GM12878 (cell line): ENCODE measurements at regions of chr17 and their contacts with region 1.

Region 1: DNA sequence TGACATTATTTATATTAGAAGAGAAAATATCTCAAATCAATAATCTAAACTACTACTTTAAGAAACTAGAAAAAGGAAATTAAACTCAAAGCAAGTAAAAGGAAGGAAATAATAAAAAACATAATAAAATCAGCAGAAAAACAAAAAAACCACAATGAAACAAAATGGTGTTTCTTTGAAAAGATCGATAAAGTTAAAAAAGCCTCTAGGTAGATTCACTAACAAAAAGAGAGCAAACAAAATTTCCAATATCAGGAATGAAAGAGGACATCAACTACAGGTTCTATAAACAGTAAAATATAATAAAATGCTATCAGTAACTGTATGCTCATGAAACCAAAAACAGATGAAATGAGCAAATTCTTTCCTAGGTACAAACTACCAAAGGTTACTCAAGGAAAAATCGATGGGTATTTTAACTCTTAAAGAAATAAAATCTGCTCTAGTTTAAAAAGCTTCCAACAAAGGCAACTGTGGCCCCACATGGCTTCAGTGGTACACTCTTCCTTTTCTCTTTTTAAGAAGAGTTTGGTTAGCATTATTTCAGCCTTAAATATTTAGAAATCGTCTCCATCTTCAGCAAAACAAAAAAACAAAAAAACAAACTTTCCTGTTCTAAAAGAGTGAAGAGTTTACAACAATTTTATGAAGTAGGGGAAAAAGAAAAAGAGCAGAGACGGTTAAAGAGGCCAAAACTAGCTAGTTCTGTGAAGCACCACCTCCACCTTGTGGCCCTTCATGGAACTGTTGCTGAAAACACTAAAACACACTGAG is 102.2 kb downstream of the TRIM37 start:
- DNase-seq: peak; percentile 48
- ATAC-seq: peak; percentile 55
- H3K4me3 ChIP-seq: no peak overlapping the region
- H3K27ac ChIP-seq: no peak overlapping the region
- H3K4me1 ChIP-seq: peaks cover 18% of the 10 kb centered on the region
- H3K27me3 ChIP-seq: no peaks in the 10 kb centered on the region
- CTCF ChIP-seq: peak; percentile 91 to 93 (median 92)
- EP300 ChIP-seq: no peak
- POLR2A ChIP-seq: no peak
- RAD21 ChIP-seq: peak; percentile 98

Region 2: GRCh38 chr17:58517734-58518609 is 486.6 kb before region 1 on chr17:
- CTCF ChIA-PET with region 1: interaction called, 23 read pairs
- POLR2A ChIA-PET with region 1: interaction called, 3 read pairs
- RAD21 ChIA-PET with region 1: interaction called, 37 read pairs
- SMC1A ChIA-PET with region 1: interaction called, 28 read pairs
- in situ Hi-C with region 1: loop called (anchors 5 kb)
- intact Hi-C with region 1: loop called (anchors 1 kb)
- DNase-seq: peak; percentile 99
- ATAC-seq: peak; percentile 89
- H3K4me3 ChIP-seq: peak overlapping the region; percentile 99
- H3K27ac ChIP-seq: peak overlapping the region; percentile 93
- H3K4me1 ChIP-seq: peaks cover 19% of the 10 kb centered on the region
- H3K27me3 ChIP-seq: no peaks in the 10 kb centered on the region
- CTCF ChIP-seq: no peak
- EP300 ChIP-seq: peak in 1 of 2 experiments; percentile 44; a peak in 1 of 4 replicates
- POLR2A ChIP-seq: peak; percentile 86
- RAD21 ChIP-seq: no peak

Region 3: GRCh38 chr17:58577642-58578091 is 426.9 kb before region 1 on chr17:
- CTCF ChIA-PET with region 1: interaction called, 52 read pairs
- POLR2A ChIA-PET with region 1: interaction called, 5 read pairs
- RAD21 ChIA-PET with region 1: interaction called, 24 read pairs
- SMC1A ChIA-PET with region 1: interaction called, 53 read pairs
- in situ Hi-C with region 1: loop called (anchors 5 kb)
- intact Hi-C with region 1: loop called (anchors 1 kb)
- DNase-seq: no peak
- ATAC-seq: peak; percentile 82
- H3K4me3 ChIP-seq: no peak overlapping the region
- H3K27ac ChIP-seq: no peak overlapping the region
- H3K4me1 ChIP-seq: peaks cover 11% of the 10 kb centered on the region
- H3K27me3 ChIP-seq: no peaks in the 10 kb centered on the region
- CTCF ChIP-seq: peak; percentile 63 to 84 (median 77)
- EP300 ChIP-seq: no peak
- POLR2A ChIP-seq: no peak
- RAD21 ChIP-seq: peak; percentile 52

Region 4: DNA sequence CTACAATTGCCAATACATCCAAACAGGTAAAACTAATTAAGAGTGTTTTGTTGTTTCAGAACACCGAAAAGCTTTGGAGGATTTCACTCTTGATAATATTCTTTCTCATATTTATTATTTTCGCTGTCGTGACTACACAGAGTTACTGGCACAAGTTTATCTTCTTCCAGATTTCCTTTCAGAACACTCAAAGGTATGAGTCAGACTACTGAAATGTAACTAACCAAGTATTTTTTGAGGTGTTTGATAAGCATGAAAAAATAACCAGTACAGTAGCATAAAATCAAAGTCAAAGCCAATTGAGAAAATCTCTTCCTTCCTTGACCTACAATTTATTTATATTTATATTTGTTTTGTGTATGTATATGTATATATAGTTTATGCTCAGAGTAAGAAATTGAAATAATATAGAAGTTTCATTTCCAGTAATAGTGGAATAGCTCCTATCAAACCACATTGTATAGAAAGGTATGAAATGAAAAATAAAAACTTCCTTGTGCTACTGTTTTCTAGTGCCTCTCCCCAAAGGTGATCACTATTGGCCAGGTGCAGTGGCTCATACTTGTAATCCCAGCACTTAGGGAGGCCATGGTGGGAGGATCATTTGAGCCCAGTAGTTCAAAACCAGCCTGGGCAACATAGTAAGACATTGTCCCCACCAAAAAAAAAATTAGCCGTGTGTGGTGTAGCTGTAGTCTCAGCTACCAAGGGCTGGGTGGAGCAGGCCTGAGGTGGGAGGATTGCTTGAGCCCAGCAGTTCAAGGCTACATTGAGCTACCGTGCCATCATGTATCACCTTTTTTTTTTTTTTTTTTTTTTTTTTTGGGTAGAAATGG is 301.2 kb before region 1 on chr17:
- CTCF ChIA-PET with region 1: interaction called, 22 read pairs
- POLR2A ChIA-PET with region 1: interaction called, 6 read pairs
- RAD21 ChIA-PET with region 1: interaction called, 8 read pairs
- SMC1A ChIA-PET with region 1: interaction called, 19 read pairs
- in situ Hi-C with region 1: no loop called
- intact Hi-C with region 1: no loop called
- DNase-seq: no peak
- ATAC-seq: 0 out of 3 replicates have a peak, but pooled peaks have one; percentile 3
- H3K4me3 ChIP-seq: no peak overlapping the region
- H3K27ac ChIP-seq: peak overlapping the region; percentile 78; the same call in 1 of the 2 replicates
- H3K4me1 ChIP-seq: peaks cover 41% of the 10 kb centered on the region
- H3K27me3 ChIP-seq: no peaks in the 10 kb centered on the region
- CTCF ChIP-seq: no peak
- EP300 ChIP-seq: no peak
- POLR2A ChIP-seq: no peak
- RAD21 ChIP-seq: no peak

Region 5: DNA sequence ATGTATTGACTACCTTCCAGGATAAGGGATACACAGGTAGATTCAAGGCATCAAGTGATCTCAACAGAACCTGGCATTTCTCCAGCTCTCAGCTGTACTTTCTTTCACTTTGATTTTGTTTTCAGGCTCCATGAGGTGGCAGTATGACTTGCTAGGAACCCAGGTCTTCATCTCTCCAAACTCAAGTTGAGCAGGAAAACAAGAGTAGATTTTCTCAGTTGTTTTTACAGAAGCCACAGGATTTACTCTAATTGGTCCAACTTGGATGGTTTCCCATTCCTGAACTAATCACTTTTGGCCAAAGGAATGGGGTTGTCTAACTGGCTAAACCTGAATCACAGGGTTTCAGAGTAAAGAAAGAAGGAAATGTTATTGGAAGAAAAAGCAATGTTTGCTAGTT is 44.5 kb before region 1 on chr17:
- CTCF ChIA-PET with region 1: interaction called, 59 read pairs
- POLR2A ChIA-PET with region 1: interaction called, 4 read pairs
- RAD21 ChIA-PET with region 1: interaction called, 21 read pairs
- SMC1A ChIA-PET with region 1: interaction called, 40 read pairs
- in situ Hi-C with region 1: no loop called
- intact Hi-C with region 1: loop called (anchors 1 kb)
- DNase-seq: no peak
- ATAC-seq: peak; percentile 58
- H3K4me3 ChIP-seq: no peak overlapping the region
- H3K27ac ChIP-seq: no peak overlapping the region
- H3K4me1 ChIP-seq: no peaks in the 10 kb centered on the region
- H3K27me3 ChIP-seq: no peaks in the 10 kb centered on the region
- CTCF ChIP-seq: peak; percentile 5 to 53 (median 24); a peak in 3 of 6 replicates
- EP300 ChIP-seq: no peak
- POLR2A ChIP-seq: no peak
- RAD21 ChIP-seq: peak; percentile 61

Region 6: GRCh38 chr17:58991718-58992331 is 12.7 kb before region 1 on chr17:
- CTCF ChIA-PET with region 1: interaction called, 9 read pairs
- POLR2A ChIA-PET with region 1: no interaction called
- RAD21 ChIA-PET with region 1: interaction called, 30 read pairs
- SMC1A ChIA-PET with region 1: interaction called, 28 read pairs
- in situ Hi-C with region 1: no loop called
- intact Hi-C with region 1: no loop called
- DNase-seq: peak; percentile 39
- ATAC-seq: peak; percentile 96
- H3K4me3 ChIP-seq: no peak overlapping the region
- H3K27ac ChIP-seq: no peak overlapping the region
- H3K4me1 ChIP-seq: peaks cover 6% of the 10 kb centered on the region
- H3K27me3 ChIP-seq: no peaks in the 10 kb centered on the region
- CTCF ChIP-seq: no peak
- EP300 ChIP-seq: no peak
- POLR2A ChIP-seq: no peak
- RAD21 ChIP-seq: no peak

Region 7: DNA sequence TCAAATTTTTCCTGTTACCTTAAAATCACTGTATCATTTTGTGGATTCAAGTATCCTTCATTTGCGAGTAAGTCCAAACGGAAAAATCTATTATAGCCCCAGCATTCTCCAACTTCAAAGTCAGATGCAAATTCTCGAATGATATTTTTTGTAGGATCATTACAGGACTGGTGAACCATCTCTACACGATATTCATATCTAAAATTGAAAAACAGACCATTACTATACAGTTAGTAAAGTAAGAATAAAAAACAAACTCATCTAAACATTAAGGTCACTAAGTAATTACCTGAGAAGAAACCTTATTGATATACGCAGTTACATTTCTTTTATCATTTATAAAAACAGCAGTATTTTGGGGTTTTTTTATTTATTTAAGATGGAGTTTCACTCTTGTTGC is 52.3 kb after region 1 on chr17:
- CTCF ChIA-PET with region 1: no interaction called
- POLR2A ChIA-PET with region 1: no interaction called
- RAD21 ChIA-PET with region 1: no interaction called
- SMC1A ChIA-PET with region 1: no interaction called
- in situ Hi-C with region 1: no loop called
- intact Hi-C with region 1: no loop called
- DNase-seq: no peak
- ATAC-seq: no peak
- H3K4me3 ChIP-seq: no peak overlapping the region
- H3K27ac ChIP-seq: no peak overlapping the region
- H3K4me1 ChIP-seq: no peaks in the 10 kb centered on the region
- H3K27me3 ChIP-seq: no peaks in the 10 kb centered on the region
- CTCF ChIP-seq: no peak
- EP300 ChIP-seq: no peak
- POLR2A ChIP-seq: no peak
- RAD21 ChIP-seq: no peak

Region 8: DNA sequence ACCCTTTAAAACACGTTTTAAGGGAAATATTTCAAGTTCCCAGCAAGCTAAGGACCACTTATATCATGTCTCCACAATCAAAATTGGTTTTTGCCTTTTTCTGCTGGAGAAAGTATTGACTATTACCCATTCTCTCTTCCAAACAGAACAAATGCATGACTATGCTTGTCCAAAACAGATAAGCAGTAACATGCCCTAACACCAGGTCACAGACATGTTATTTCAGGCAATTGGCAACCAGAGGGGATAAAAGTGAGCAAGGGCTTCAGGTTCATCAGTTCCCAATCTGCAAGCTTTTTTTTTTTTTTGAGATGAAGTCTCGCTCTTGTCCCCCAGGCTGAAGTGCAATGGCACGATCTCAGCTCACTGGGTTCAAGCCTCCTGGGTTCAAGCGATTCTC is 135.4 kb after region 1 on chr17:
- CTCF ChIA-PET with region 1: no interaction called
- POLR2A ChIA-PET with region 1: no interaction called
- RAD21 ChIA-PET with region 1: no interaction called
- SMC1A ChIA-PET with region 1: no interaction called
- in situ Hi-C with region 1: no loop called
- intact Hi-C with region 1: no loop called
- DNase-seq: no peak
- ATAC-seq: no peak
- H3K4me3 ChIP-seq: no peak overlapping the region
- H3K27ac ChIP-seq: no peak overlapping the region
- H3K4me1 ChIP-seq: no peaks in the 10 kb centered on the region
- H3K27me3 ChIP-seq: no peaks in the 10 kb centered on the region
- CTCF ChIP-seq: no peak
- EP300 ChIP-seq: no peak
- POLR2A ChIP-seq: no peak
- RAD21 ChIP-seq: no peak